Naive thymus-derived CD4-positive, alpha-beta T cell (primary cell): ENCODE measurements at regions of chrX and their contacts with region 1.

Region 1: DNA sequence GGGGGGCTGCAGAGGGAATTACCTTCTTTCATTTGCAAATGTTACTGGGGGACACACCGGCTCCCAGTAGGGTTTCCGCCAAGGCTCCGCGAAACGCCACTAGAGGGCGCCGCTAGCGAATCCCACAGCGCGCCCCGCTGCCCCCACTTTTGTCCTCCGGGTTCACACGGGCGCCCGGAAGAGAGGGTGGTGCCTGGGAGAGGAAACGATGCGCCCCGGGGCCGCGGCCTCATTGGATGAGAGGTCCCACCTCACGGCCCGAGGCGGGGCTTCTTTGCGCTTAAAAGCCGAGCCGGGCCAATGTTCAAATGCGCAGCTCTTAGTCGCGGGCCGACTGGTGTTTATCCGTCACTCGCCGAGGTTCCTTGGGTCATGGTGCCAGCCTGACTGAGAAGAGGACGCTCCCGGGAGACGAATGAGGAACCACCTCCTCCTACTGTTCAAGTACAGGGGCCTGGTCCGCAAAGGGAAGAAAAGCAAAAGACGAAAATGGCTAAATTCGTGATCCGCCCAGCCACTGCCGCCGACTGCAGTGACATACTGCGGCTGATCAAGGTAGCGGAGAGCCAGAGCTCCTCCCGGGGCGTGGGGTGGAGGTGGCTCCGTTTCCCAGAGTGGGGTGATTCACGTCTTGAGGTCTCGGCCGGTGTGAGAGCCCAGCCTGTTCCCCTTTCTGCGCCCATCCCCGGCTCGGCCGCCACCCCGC is at the start of gene SAT1:
- DNase-seq: peak; percentile 84 to 94 (median 91)
- ATAC-seq: peak; percentile 89
- H3K4me3 ChIP-seq: peak within 1 kb of the TSS; percentile 91
- H3K4me3 Mint-ChIP-seq: peak within 1 kb of the TSS; percentile 84 to 98 (median 95)
- H3K27ac ChIP-seq: peak within 1 kb of the TSS; percentile 88
- H3K27ac Mint-ChIP-seq: peak within 1 kb of the TSS; percentile 96 to 99 (median 97)
- H3K4me1 ChIP-seq: peaks cover 13 to 17% of the 10 kb centered on the region in 2 donors
- H3K4me1 Mint-ChIP-seq: peaks cover 14 to 41% (median 35%) of the 10 kb centered on the region in 7 donors
- H3K27me3 ChIP-seq: no peaks in the 10 kb centered on the region
- H3K27me3 Mint-ChIP-seq: no peaks in the 10 kb centered on the region
- total RNA-seq, gene SAT1: 68.4 to 1,059 (median 127) TPM

Region 2: DNA sequence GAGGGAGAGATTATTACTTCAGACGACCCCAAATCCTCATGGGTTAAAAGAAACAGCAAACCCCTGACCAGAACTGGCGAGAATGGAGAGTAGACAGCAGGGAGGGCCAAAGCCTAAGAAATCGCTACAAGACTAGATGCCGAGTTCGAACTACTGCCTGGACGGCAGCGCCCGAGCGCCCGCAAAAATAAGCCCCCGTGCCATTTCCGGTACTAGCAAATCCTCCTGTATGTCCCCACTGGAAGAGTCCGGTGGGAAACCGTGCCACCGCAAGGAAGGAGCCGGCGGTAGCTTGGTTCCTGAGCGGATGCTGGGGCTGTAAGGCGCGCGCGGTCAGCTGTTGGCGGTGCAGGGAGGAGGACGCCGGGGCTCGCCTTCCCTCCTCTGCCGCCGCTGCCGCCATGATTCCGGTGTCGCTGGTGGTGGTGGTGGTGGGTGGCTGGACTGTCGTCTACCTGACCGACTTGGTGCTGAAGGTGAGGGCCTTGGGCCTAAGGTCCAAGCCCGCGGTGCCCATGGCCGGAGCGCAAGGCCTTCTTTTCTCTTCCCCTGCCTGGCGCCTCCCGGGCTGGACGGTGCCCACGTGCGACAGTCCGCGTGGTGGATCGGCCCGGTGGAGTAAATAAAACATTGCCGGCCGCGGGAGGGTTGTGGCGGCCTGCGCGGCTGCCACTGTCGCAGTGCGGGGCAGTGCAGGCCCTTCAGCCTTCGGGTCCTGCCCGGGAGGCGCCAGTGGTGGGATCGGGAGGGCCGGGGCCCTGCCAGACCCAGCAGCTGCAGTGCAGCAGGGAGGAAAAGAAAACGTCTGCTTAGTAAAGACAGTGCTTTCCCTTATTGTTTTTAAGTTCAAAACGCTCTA is 1943.5 kb before region 1 on chrX and contains the start of gene MBTPS2:
- CTCF ChIA-PET with region 1: no interaction called
- POLR2A ChIA-PET with region 1: no interaction called
- intact Hi-C with region 1: loop called in 1 of 2 experiments (anchors 10 kb)
- DNase-seq: peak; percentile 51 to 82 (median 77)
- ATAC-seq: peak; percentile 97
- H3K4me3 ChIP-seq: peak within 1 kb of the TSS; percentile 83
- H3K4me3 Mint-ChIP-seq: peak within 1 kb of the TSS; percentile 82 to 96 (median 88)
- H3K27ac ChIP-seq: peak within 1 kb of the TSS; percentile 72
- H3K27ac Mint-ChIP-seq: peak within 1 kb of the TSS; percentile 83 to 95 (median 89)
- H3K4me1 ChIP-seq: peaks cover 0 to 8% of the 10 kb centered on the region in 2 donors
- H3K4me1 Mint-ChIP-seq: peaks cover 0 to 19% (median 7%) of the 10 kb centered on the region in 7 donors
- H3K27me3 ChIP-seq: no peaks in the 10 kb centered on the region
- H3K27me3 Mint-ChIP-seq: peaks cover 0 to 3% (median 0%) of the 10 kb centered on the region in 5 donors
- total RNA-seq, gene MBTPS2: 5.2 to 9.9 (median 7.2) TPM

Region 3: GRCh38 chrX:22818061-22818460 is 965.0 kb before region 1 on chrX:
- CTCF ChIA-PET with region 1: no interaction called
- POLR2A ChIA-PET with region 1: no interaction called
- intact Hi-C with region 1: no loop called
- DNase-seq: no peak
- ATAC-seq: no peak
- H3K4me3 ChIP-seq: no peak overlapping the region
- H3K4me3 Mint-ChIP-seq: no peak overlapping the region
- H3K27ac ChIP-seq: no peak overlapping the region
- H3K27ac Mint-ChIP-seq: no peak overlapping the region
- H3K4me1 ChIP-seq: no peaks in the 10 kb centered on the region
- H3K4me1 Mint-ChIP-seq: no peaks in the 10 kb centered on the region
- H3K27me3 ChIP-seq: no peaks in the 10 kb centered on the region
- H3K27me3 Mint-ChIP-seq: no peaks in the 10 kb centered on the region

Region 4: GRCh38 chrX:23694606-23695005 is 88.4 kb before region 1 on chrX:
- CTCF ChIA-PET with region 1: interaction called, 5 read pairs
- POLR2A ChIA-PET with region 1: no interaction called
- intact Hi-C with region 1: loop called in 1 of 2 experiments (anchors 1 kb)
- DNase-seq: peak in 7 of 9 donors; percentile 7 to 40 (median 34)
- ATAC-seq: peak; percentile 78
- H3K4me3 ChIP-seq: no peak overlapping the region
- H3K4me3 Mint-ChIP-seq: no peak overlapping the region
- H3K27ac ChIP-seq: no peak overlapping the region
- H3K27ac Mint-ChIP-seq: no peak overlapping the region
- H3K4me1 ChIP-seq: no peaks in the 10 kb centered on the region
- H3K4me1 Mint-ChIP-seq: peaks cover 0 to 4% (median 0%) of the 10 kb centered on the region in 7 donors
- H3K27me3 ChIP-seq: no peaks in the 10 kb centered on the region
- H3K27me3 Mint-ChIP-seq: no peaks in the 10 kb centered on the region

Region 5: GRCh38 chrX:23901805-23902204 is 118.8 kb after region 1 on chrX:
- CTCF ChIA-PET with region 1: interaction called, 15 read pairs
- POLR2A ChIA-PET with region 1: interaction called, 19 read pairs
- intact Hi-C with region 1: loop called (anchors 1 kb)
- DNase-seq: peak in 6 of 9 donors; percentile 18 to 59 (median 40)
- ATAC-seq: peak; percentile 89
- H3K4me3 ChIP-seq: no peak overlapping the region
- H3K4me3 Mint-ChIP-seq: no peak overlapping the region
- H3K27ac ChIP-seq: no peak overlapping the region
- H3K27ac Mint-ChIP-seq: no peak overlapping the region
- H3K4me1 ChIP-seq: peaks cover 0 to 2% of the 10 kb centered on the region in 2 donors
- H3K4me1 Mint-ChIP-seq: peaks cover 0 to 11% (median 1%) of the 10 kb centered on the region in 7 donors
- H3K27me3 ChIP-seq: no peaks in the 10 kb centered on the region
- H3K27me3 Mint-ChIP-seq: no peaks in the 10 kb centered on the region

Region 6: GRCh38 chrX:24024819-24025740 is 242.1 kb after region 1 on chrX:
- CTCF ChIA-PET with region 1: no interaction called
- POLR2A ChIA-PET with region 1: interaction called, 14 read pairs
- intact Hi-C with region 1: loop called (anchors 1 to 2 kb)
- DNase-seq: peak; percentile 68 to 82 (median 76)
- ATAC-seq: peak; percentile 96
- H3K4me3 ChIP-seq: peak overlapping the region; percentile 74
- H3K4me3 Mint-ChIP-seq: peak overlapping the region; percentile 71 to 94 (median 86)
- H3K27ac ChIP-seq: peak overlapping the region; percentile 96
- H3K27ac Mint-ChIP-seq: peak overlapping the region in 7 of 9 donors; percentile 48 to 92 (median 85)
- H3K4me1 ChIP-seq: no peaks in the 10 kb centered on the region
- H3K4me1 Mint-ChIP-seq: peaks cover 7 to 38% (median 27%) of the 10 kb centered on the region in 7 donors
- H3K27me3 ChIP-seq: no peaks in the 10 kb centered on the region
- H3K27me3 Mint-ChIP-seq: peaks cover 0 to 3% (median 0%) of the 10 kb centered on the region in 5 donors

Region 7: GRCh38 chrX:24464836-24465531 is 682.0 kb after region 1 on chrX and contains the start of gene PDK3:
- CTCF ChIA-PET with region 1: no interaction called
- POLR2A ChIA-PET with region 1: no interaction called
- intact Hi-C with region 1: loop called in 1 of 2 experiments (anchors 5 kb)
- DNase-seq: peak; percentile 81 to 92 (median 89)
- ATAC-seq: peak; percentile 98
- H3K4me3 ChIP-seq: peak within 1 kb of the TSS; percentile 70
- H3K4me3 Mint-ChIP-seq: peak within 1 kb of the TSS; percentile 48 to 90 (median 85)
- H3K27ac ChIP-seq: peak within 1 kb of the TSS; percentile 92
- H3K27ac Mint-ChIP-seq: peak within 1 kb of the TSS; percentile 77 to 97 (median 93)
- H3K4me1 ChIP-seq: peaks cover 14 to 24% of the 10 kb centered on the region in 2 donors
- H3K4me1 Mint-ChIP-seq: peaks cover 7 to 37% (median 33%) of the 10 kb centered on the region in 7 donors
- H3K27me3 ChIP-seq: no peaks in the 10 kb centered on the region
- H3K27me3 Mint-ChIP-seq: no peaks in the 10 kb centered on the region
- total RNA-seq, gene PDK3: 17.4 to 29.4 (median 28.5) TPM

Region 8: DNA sequence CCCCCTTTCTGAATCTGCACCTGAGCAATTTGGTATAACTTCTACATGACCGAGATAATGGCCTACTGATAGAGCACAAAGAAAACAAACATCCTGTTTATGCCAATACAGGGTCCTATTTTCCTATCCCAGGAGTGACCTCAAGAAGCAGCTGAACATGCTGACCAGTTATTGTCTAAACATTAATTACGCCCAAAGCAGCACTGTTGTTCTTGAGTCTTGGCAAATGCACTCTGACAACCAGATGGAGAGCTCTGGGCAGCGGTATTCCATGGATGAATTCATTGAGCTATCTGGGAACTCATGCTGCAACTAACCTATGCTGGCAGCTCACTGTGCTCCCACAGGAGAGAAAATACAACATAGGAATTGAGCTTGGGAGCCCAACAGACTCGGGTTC is 811.5 kb after region 1 on chrX:
- CTCF ChIA-PET with region 1: no interaction called
- POLR2A ChIA-PET with region 1: no interaction called
- intact Hi-C with region 1: no loop called
- DNase-seq: no peak
- ATAC-seq: no peak
- H3K4me3 ChIP-seq: no peak overlapping the region
- H3K4me3 Mint-ChIP-seq: no peak overlapping the region
- H3K27ac ChIP-seq: no peak overlapping the region
- H3K27ac Mint-ChIP-seq: peak overlapping the region in 1 of 9 donors; percentile 43
- H3K4me1 ChIP-seq: no peaks in the 10 kb centered on the region
- H3K4me1 Mint-ChIP-seq: peaks cover 0 to 4% (median 0%) of the 10 kb centered on the region in 7 donors
- H3K27me3 ChIP-seq: no peaks in the 10 kb centered on the region
- H3K27me3 Mint-ChIP-seq: peaks cover 0 to 4% (median 0%) of the 10 kb centered on the region in 5 donors